HCT116 (cell line): ENCODE measurements at regions of chr2 and their contacts with region 1.

Region 1: DNA sequence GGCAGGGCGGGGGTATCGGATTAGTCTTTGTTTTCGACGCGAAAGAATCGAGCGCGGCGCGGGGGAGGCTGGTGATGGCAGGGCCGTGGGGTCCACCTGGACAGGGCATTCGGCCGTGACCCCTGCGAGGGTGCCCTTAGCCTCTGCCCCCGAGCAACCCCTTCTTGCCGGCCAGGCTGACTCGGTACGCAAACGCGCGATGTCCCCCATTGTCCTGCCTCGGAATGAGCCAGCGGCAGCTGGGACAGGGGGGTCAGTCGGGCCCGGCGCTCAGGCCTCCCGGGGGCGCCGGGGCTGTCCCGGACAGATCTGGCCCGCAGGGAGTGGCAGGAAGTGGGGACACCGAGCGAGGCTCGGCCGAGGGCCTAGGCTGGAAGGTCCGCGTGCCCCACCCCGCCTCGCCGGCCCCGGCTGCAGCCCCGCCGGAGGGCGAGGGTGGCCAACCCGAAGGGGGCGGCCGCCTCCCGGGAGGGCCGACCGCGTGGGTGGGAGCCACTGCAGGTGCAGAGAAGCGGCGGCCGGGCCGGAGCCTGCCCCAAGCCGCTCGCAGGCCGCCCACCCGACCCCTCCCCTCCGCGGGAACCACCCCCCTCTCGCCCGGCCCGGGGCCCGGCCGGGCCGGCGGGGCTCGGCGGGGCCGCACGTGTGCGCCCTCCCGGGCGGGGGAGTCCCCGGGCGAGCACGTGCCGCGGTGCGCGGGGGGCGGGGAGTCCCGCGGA is at the start of gene TET3:
- DNase-seq: no peak
- ATAC-seq: peak; percentile 20
- H3K4me3 ChIP-seq: peak within 1 kb of the TSS; percentile 66 to 72
- H3K27ac ChIP-seq: peak within 1 kb of the TSS; percentile 100
- H3K4me1 ChIP-seq: peaks cover 42 to 62% of the 10 kb centered on the region in 2 experiments
- H3K27me3 ChIP-seq: no peaks in the 10 kb centered on the region
- CTCF ChIP-seq: no peak
- POLR2A ChIP-seq: peak; percentile 71
- RAD21 ChIP-seq: no peak
- total RNA-seq, gene TET3: 15.4 TPM

Region 2: DNA sequence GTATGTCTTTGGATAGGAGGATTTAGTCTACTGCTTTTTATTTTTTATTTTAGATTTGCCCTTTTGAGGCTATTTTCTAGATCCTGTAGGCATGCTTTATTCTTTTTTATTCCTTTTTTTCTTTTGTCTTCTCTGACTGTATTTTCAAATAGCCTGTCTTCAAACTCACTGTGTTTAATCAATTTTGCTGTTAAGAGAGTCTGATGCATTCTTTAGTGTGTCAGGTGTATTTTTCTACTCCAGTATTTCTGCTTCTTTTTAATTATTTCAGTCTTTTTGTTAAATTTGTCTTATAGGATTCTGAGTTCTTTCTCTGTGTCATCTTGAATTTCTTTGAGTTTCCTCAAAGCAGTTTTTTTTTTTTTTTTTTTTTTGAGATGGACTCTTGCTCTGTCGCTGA is 455.7 kb before region 1 on chr2:
- CTCF ChIA-PET with region 1: no interaction called
- POLR2A ChIA-PET with region 1: no interaction called
- RAD21 ChIA-PET with region 1: no interaction called
- intact Hi-C with region 1: no loop called
- DNase-seq: no peak
- ATAC-seq: no peak
- H3K4me3 ChIP-seq: no peak overlapping the region
- H3K27ac ChIP-seq: no peak overlapping the region
- H3K4me1 ChIP-seq: no peaks in the 10 kb centered on the region
- H3K27me3 ChIP-seq: no peaks in the 10 kb centered on the region
- CTCF ChIP-seq: no peak
- POLR2A ChIP-seq: no peak
- RAD21 ChIP-seq: no peak

Region 3: DNA sequence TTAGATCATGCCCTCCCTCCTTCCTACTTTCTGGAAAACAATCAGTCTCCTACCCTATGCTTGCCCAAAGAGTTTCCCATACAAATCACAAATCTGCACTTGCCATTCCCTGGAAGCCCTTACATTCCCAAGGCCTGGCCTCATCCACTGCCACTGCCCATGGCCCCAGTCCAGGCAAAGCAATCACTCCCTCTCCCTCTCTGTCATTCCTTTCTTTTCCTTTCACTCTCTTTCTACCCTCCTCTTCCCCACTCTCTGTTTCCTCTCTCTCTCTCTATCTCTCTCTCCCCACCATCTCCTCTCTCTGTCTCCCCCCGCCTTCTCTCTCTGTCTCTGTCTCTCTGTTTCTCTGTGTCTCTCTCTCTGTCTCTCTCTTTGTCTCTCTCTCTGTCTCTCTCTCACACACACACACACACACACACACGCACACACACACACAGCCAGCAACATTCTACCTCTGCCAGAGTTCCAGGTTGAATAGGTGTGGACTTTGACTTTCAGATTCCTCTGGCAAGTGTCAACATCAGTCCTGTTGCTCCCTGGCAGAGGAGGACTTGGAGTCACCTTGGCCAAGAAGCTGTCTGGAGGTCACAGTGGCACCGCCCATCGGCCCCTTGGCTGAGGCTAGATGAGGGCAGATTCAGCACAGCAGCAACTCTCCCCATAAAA is 298.5 kb before region 1 on chr2:
- CTCF ChIA-PET with region 1: no interaction called
- POLR2A ChIA-PET with region 1: no interaction called
- RAD21 ChIA-PET with region 1: no interaction called
- intact Hi-C with region 1: loop called (anchors 5 kb)
- DNase-seq: no peak
- ATAC-seq: no peak
- H3K4me3 ChIP-seq: no peak overlapping the region
- H3K27ac ChIP-seq: no peak overlapping the region
- H3K4me1 ChIP-seq: no peaks in the 10 kb centered on the region
- H3K27me3 ChIP-seq: no peaks in the 10 kb centered on the region
- CTCF ChIP-seq: no peak
- POLR2A ChIP-seq: no peak
- RAD21 ChIP-seq: no peak

Region 4: DNA sequence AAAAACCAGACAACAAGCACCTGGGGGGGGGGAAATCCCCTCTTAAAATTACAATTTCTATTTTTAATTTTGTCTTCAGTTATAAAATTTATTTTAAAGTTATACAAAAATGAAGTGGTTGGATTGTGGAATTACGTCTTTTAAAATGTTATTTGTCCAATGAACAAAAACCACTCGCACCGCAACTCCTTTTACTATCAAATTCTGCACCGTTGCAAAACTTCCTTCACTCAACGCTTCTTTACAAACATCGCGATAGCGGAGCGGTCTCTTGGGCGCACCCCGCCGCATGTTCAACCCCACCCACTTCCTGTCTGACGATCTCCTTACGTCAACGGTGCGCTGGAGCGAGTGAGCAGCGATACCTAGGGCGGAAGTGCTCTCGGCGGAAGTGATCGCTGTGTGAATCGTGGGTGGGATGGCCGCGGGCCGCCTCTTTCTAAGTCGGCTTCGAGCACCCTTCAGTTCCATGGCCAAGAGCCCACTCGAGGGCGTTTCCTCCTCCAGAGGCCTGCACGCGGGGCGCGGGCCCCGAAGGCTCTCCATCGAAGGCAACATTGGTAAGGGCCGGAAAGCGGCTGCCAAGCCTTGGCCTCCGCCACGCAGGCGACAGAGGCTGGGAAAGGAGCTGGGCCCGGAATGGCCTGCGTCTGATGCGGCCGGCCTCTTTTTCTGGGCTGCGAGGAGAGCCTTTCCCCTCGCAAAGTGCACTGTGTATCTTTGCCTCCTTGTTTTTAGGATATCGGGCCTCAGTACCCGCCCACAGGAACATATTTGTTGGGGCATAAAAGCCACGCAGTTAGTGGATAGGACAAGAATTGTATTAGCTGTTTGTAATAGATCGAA is 57.6 kb before region 1 on chr2 and contains the start of gene DGUOK:
- CTCF ChIA-PET with region 1: no interaction called
- POLR2A ChIA-PET with region 1: no interaction called
- RAD21 ChIA-PET with region 1: no interaction called
- intact Hi-C with region 1: loop called (anchors 2 kb)
- DNase-seq: peak; percentile 99
- ATAC-seq: peak; percentile 99
- H3K4me3 ChIP-seq: peak within 1 kb of the TSS; percentile 89 to 90
- H3K27ac ChIP-seq: peak within 1 kb of the TSS; percentile 62
- H3K4me1 ChIP-seq: peaks cover 10 to 17% of the 10 kb centered on the region in 2 experiments; a peak in 3 of 4 replicates
- H3K27me3 ChIP-seq: no peaks in the 10 kb centered on the region
- CTCF ChIP-seq: no peak
- POLR2A ChIP-seq: no peak
- RAD21 ChIP-seq: no peak
- total RNA-seq, gene DGUOK: 100 TPM